GM12878 (cell line): ENCODE measurements at regions of chr7 and their contacts with region 1.

Region 1: GRCh38 chr7:155713384-155713783 is 68.9 kb downstream of the RBM33 start:
- DNase-seq: no peak
- ATAC-seq: peak; percentile 51; the same call in 2 of the 3 replicates
- H3K4me3 ChIP-seq: no peak overlapping the region
- H3K27ac ChIP-seq: no peak overlapping the region
- H3K4me1 ChIP-seq: peaks cover 6% of the 10 kb centered on the region
- H3K27me3 ChIP-seq: no peaks in the 10 kb centered on the region
- CTCF ChIP-seq: no peak
- EP300 ChIP-seq: no peak
- POLR2A ChIP-seq: no peak
- RAD21 ChIP-seq: no peak

Region 2: GRCh38 chr7:155610633-155611193 is 102.7 kb before region 1 on chr7:
- CTCF ChIA-PET with region 1: no interaction called
- POLR2A ChIA-PET with region 1: no interaction called
- RAD21 ChIA-PET with region 1: no interaction called
- SMC1A ChIA-PET with region 1: no interaction called
- in situ Hi-C with region 1: no loop called
- intact Hi-C with region 1: no loop called
- DNase-seq: no peak
- ATAC-seq: no peak
- H3K4me3 ChIP-seq: no peak overlapping the region
- H3K27ac ChIP-seq: no peak overlapping the region
- H3K4me1 ChIP-seq: no peaks in the 10 kb centered on the region
- H3K27me3 ChIP-seq: no peaks in the 10 kb centered on the region; a peak in 1 of 4 replicates
- CTCF ChIP-seq: no peak
- EP300 ChIP-seq: no peak
- POLR2A ChIP-seq: no peak
- RAD21 ChIP-seq: no peak

Region 3: DNA sequence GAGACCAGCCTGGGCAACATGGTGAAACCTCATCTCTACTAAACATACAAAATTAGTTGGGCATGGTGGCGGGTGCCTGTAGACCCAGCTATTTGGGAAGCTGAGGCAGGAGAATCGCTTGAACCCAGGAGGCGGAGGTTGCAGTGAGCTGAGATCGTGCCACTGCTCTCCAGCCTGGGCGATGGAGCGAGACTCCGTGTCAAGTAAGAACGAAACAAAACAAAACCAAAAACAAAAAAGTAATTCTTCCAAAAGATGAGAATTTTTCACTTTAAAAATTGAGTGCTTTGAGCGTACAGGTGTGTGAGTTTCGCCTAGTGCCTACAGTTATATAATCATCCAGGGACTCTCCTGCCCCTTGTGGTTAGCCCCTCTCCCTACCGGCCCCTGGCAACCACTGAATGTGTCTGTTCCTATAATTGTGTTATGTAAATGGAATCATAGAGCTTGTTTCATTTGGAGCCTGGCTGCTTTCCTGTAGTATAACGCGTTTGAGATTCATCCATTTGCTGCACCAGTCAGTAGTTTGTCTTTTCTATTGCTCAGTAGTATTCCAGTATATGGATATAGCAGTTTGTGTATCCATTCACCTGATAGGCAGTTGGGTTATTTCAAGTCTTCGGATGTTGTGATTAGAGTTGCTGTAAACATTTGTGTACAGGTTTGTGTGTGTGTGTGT is 11.1 kb after region 1 on chr7:
- CTCF ChIA-PET with region 1: interaction called, 3 read pairs
- POLR2A ChIA-PET with region 1: interaction called, 3 read pairs
- RAD21 ChIA-PET with region 1: no interaction called
- SMC1A ChIA-PET with region 1: interaction called, 10 read pairs
- in situ Hi-C with region 1: no loop called
- intact Hi-C with region 1: no loop called
- DNase-seq: no peak
- ATAC-seq: peak; percentile 78
- H3K4me3 ChIP-seq: peak overlapping the region; percentile 62
- H3K27ac ChIP-seq: peak overlapping the region; percentile 87
- H3K4me1 ChIP-seq: peaks cover 39% of the 10 kb centered on the region
- H3K27me3 ChIP-seq: no peaks in the 10 kb centered on the region
- CTCF ChIP-seq: peak; percentile 16 to 27 (median 23); a peak in 2 of 6 replicates
- EP300 ChIP-seq: no peak
- POLR2A ChIP-seq: no peak
- RAD21 ChIP-seq: no peak

Region 4: GRCh38 chr7:155769701-155770100 is 56.3 kb after region 1 on chr7:
- CTCF ChIA-PET with region 1: interaction called, 14 read pairs
- POLR2A ChIA-PET with region 1: no interaction called
- RAD21 ChIA-PET with region 1: interaction called, 6 read pairs
- SMC1A ChIA-PET with region 1: no interaction called
- in situ Hi-C with region 1: no loop called
- intact Hi-C with region 1: no loop called
- DNase-seq: no peak
- ATAC-seq: no peak
- H3K4me3 ChIP-seq: no peak overlapping the region
- H3K27ac ChIP-seq: no peak overlapping the region
- H3K4me1 ChIP-seq: peaks cover 4% of the 10 kb centered on the region; the same call in 1 of the 2 replicates
- H3K27me3 ChIP-seq: no peaks in the 10 kb centered on the region
- CTCF ChIP-seq: no peak
- EP300 ChIP-seq: no peak
- POLR2A ChIP-seq: no peak
- RAD21 ChIP-seq: no peak